CD14-positive monocyte (primary cell): ENCODE measurements at regions of chr1 and their contacts with region 1.

Region 1: GRCh38 chr1:156054500-156055280 is at the start of gene LAMTOR2:
- DNase-seq: peak; percentile 87 to 93 (median 91)
- H3K4me3 ChIP-seq: peak within 1 kb of the TSS; percentile 61 to 99 (median 93)
- H3K4me3 Mint-ChIP-seq: peak within 1 kb of the TSS; percentile 93 to 97
- H3K27ac ChIP-seq: peak within 1 kb of the TSS; percentile 84 to 86
- H3K27ac Mint-ChIP-seq: peak within 1 kb of the TSS; percentile 84 to 96 (median 93)
- H3K4me1 ChIP-seq: peaks cover 23 to 38% of the 10 kb centered on the region in 2 donors
- H3K4me1 Mint-ChIP-seq: peaks cover 25% of the 10 kb centered on the region
- H3K27me3 ChIP-seq: no peaks in the 10 kb centered on the region
- H3K27me3 Mint-ChIP-seq: peaks cover 0 to 2% (median 1%) of the 10 kb centered on the region in 3 donors
- CTCF ChIP-seq: no peak
- polyA plus RNA-seq, gene LAMTOR2: 99.8 to 227 (median 210) TPM

Region 2: GRCh38 chr1:155934097-155934935 is 120.4 kb before region 1 on chr1 and contains the start of gene KHDC4:
- intact Hi-C with region 1: loop called (anchors 2 to 5 kb)
- DNase-seq: peak; percentile 98 to 99 (median 99)
- H3K4me3 ChIP-seq: peak within 1 kb of the TSS; percentile 63 to 96 (median 94)
- H3K4me3 Mint-ChIP-seq: no peak within 1 kb of the TSS
- H3K27ac ChIP-seq: peak within 1 kb of the TSS; percentile 88 to 94
- H3K27ac Mint-ChIP-seq: peak within 1 kb of the TSS in 1 of 7 donors; percentile 87
- H3K4me1 ChIP-seq: peaks cover 22 to 44% of the 10 kb centered on the region in 2 donors
- H3K4me1 Mint-ChIP-seq: peaks cover 25% of the 10 kb centered on the region
- H3K27me3 ChIP-seq: no peaks in the 10 kb centered on the region
- H3K27me3 Mint-ChIP-seq: peaks cover 0 to 2% (median 0%) of the 10 kb centered on the region in 3 donors
- CTCF ChIP-seq: peak; percentile 28
- polyA plus RNA-seq, gene KHDC4: 3.4 to 22.0 (median 3.5) TPM

Region 3: GRCh38 chr1:156012051-156012817 is 42.5 kb before region 1 on chr1:
- intact Hi-C with region 1: loop called in 1 of 2 experiments (anchors 5 kb)
- DNase-seq: no peak
- H3K4me3 ChIP-seq: no peak overlapping the region
- H3K4me3 Mint-ChIP-seq: no peak overlapping the region
- H3K27ac ChIP-seq: no peak overlapping the region
- H3K27ac Mint-ChIP-seq: peak overlapping the region in 1 of 7 donors; percentile 3
- H3K4me1 ChIP-seq: no peaks in the 10 kb centered on the region
- H3K4me1 Mint-ChIP-seq: no peaks in the 10 kb centered on the region
- H3K27me3 ChIP-seq: no peaks in the 10 kb centered on the region
- H3K27me3 Mint-ChIP-seq: no peaks in the 10 kb centered on the region
- CTCF ChIP-seq: no peak

Region 4: DNA sequence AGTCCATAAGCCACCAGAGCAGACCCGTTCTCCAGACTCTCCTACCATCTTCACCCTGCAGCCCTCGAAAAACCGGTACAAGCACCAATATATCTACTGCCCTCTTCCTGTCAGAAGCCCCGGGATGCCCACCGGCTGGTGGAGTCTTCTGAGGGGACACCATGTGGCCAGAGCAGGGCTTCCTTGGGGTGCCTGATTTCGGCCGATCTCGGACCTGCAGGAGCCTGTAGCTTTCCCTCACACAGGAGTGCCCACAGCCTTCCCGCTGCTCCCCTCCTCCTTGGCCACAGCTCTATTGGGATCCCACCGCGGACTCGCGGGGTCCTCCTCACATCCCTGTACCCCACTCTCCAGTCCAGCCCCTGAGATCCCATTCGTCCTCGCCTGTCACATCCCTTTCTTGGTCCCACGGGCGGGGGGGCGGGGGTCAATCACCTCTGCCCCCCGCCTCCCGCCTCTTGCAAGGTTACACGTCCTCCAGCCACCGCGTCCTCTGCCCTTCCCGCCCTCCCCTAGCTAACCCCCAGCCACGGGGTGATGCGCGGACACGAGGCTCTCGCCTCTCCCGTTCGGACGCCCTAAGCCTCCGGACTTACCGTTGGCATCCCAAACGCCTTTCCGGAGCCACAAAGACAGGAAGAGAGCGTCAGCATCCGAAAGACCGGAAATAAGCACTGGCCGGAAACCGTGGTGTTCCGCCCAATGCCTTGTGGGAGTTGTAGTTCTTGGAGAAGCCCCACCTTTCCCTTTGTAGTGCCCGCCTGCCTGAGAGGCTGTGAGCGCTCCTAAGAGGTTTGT is 34.2 kb before region 1 on chr1 and contains the start of gene SSR2:
- intact Hi-C with region 1: loop called (anchors 2 to 5 kb)
- DNase-seq: peak; percentile 80 to 89 (median 87)
- H3K4me3 ChIP-seq: peak within 1 kb of the TSS; percentile 51 to 92 (median 81)
- H3K4me3 Mint-ChIP-seq: peak within 1 kb of the TSS; percentile 91 to 94
- H3K27ac ChIP-seq: peak within 1 kb of the TSS; percentile 45 to 81
- H3K27ac Mint-ChIP-seq: peak within 1 kb of the TSS; percentile 84 to 97 (median 92)
- H3K4me1 ChIP-seq: peaks cover 18 to 23% of the 10 kb centered on the region in 2 donors
- H3K4me1 Mint-ChIP-seq: peaks cover 15% of the 10 kb centered on the region
- H3K27me3 ChIP-seq: no peaks in the 10 kb centered on the region
- H3K27me3 Mint-ChIP-seq: peaks cover 9 to 10% (median 10%) of the 10 kb centered on the region in 3 donors
- CTCF ChIP-seq: no peak
- polyA plus RNA-seq, gene SSR2: 374 to 614 (median 414) TPM

Region 5: GRCh38 chr1:156025877-156026276 is 28.8 kb before region 1 on chr1:
- intact Hi-C with region 1: loop called (anchors 2 to 5 kb)
- DNase-seq: peak; percentile 18 to 44 (median 21)
- H3K4me3 ChIP-seq: no peak overlapping the region
- H3K4me3 Mint-ChIP-seq: no peak overlapping the region
- H3K27ac ChIP-seq: no peak overlapping the region
- H3K27ac Mint-ChIP-seq: no peak overlapping the region
- H3K4me1 ChIP-seq: peaks cover 2 to 3% of the 10 kb centered on the region in 2 donors
- H3K4me1 Mint-ChIP-seq: peaks cover 4% of the 10 kb centered on the region
- H3K27me3 ChIP-seq: no peaks in the 10 kb centered on the region
- H3K27me3 Mint-ChIP-seq: peaks cover 11 to 17% (median 17%) of the 10 kb centered on the region in 3 donors
- CTCF ChIP-seq: peak; percentile 65

Region 6: GRCh38 chr1:156177919-156178654 is 123.4 kb after region 1 on chr1:
- intact Hi-C with region 1: no loop called
- DNase-seq: no peak
- H3K4me3 ChIP-seq: no peak overlapping the region
- H3K4me3 Mint-ChIP-seq: no peak overlapping the region
- H3K27ac ChIP-seq: no peak overlapping the region
- H3K27ac Mint-ChIP-seq: peak overlapping the region in 1 of 7 donors; percentile 33
- H3K4me1 ChIP-seq: no peaks in the 10 kb centered on the region
- H3K4me1 Mint-ChIP-seq: peaks cover 3% of the 10 kb centered on the region
- H3K27me3 ChIP-seq: no peaks in the 10 kb centered on the region
- H3K27me3 Mint-ChIP-seq: peaks cover 0 to 2% (median 0%) of the 10 kb centered on the region in 3 donors
- CTCF ChIP-seq: no peak